ENCODE measurements at regions of chr3 and their contacts with region 1.

Region 1: DNA sequence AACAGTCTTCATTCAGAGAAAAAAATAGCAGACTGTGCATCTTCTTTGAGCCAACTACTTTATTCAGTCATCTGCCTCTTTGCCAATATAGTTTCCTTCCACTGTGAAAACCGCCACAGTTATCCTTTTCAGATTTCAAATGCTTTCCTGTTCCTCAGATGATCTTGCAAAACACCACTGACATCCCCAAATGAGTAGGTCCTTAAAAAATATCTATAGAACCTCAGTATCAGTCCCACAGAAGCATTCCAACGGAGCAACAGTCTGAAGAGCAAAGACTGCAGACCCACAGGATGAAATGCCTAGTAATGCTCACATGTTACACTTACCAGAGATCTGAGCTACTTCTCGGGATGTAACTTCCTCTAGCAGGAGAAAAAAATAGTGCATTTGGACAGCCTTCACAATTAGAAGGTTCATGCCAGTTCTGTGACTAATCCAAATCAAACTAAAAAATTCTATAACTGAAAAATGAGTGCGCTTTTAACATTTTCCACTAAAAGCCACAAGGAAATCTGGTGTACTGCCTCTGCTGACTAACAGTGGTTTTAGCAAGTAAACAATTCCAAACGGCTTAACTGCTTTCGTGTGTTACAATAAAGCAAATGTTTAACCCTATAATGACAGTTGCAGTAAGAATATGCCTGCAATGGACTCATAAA is at the start of gene ANKRD28:
- DNase-seq: peak; percentile 91 to 98 (median 96)
- H3K4me3 ChIP-seq: peak within 1 kb of the TSS; percentile 26 to 100 (median 83)
- H3K27ac ChIP-seq: peak within 1 kb of the TSS; percentile 100
- H3K4me1 ChIP-seq: peaks cover 27 to 70% (median 50%) of the 10 kb centered on the region in 4 experiments
- H3K27me3 ChIP-seq: no peaks in the 10 kb centered on the region

Region 2: DNA sequence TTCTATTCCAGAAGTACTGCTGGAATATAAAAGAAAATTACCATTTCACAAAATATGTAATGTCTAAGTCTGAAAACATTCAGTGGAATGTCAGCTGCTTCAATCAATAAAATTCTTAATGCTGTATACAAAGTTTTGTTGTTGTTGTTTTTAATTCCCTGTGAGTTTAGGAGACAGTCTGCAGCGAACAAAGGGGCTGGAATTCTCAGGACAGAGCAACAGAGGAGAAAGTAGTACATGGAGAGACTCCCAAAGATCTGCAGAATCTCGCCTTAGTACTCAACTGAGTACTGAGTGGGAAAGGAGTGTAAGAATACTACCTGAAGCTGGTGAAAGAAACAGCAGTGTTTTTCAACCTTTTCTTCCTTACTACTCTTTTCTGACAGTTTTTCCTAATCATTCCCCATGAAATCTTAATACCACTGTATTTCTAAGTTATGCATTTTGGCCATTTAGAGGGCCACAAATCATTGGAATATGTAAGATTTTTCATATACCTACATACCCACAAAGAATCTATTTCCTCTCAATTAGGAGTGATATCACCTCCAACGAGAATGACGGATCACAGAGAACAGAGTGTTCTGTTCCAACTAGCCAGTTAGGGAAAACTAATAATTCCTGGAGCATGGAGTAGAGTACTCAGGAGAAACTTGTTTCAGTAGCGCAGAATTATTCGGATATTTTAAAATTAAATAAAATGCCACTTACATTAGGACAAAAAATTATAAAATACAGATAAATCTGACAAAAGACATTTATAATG is 16.0 kb before region 1 on chr3:
- CTCF ChIA-PET with region 1: interaction called, 10 read pairs
- POLR2A ChIA-PET with region 1: interaction called, 3 read pairs
- DNase-seq: no peak
- H3K4me3 ChIP-seq: no peak overlapping the region
- H3K27ac ChIP-seq: no peak overlapping the region
- H3K4me1 ChIP-seq: peaks cover 7 to 37% (median 12%) of the 10 kb centered on the region in 4 experiments
- H3K27me3 ChIP-seq: no peaks in the 10 kb centered on the region

Region 3: GRCh38 chr3:15815696-15816095 is 17.9 kb after region 1 on chr3:
- CTCF ChIA-PET with region 1: interaction called, 54 read pairs
- POLR2A ChIA-PET with region 1: no interaction called
- DNase-seq: peak; percentile 78 to 87 (median 87)
- H3K4me3 ChIP-seq: no peak overlapping the region
- H3K27ac ChIP-seq: no peak overlapping the region
- H3K4me1 ChIP-seq: peaks cover 2 to 13% (median 9%) of the 10 kb centered on the region in 4 experiments
- H3K27me3 ChIP-seq: no peaks in the 10 kb centered on the region

Region 4: GRCh38 chr3:16130066-16130465 is 332.3 kb after region 1 on chr3:
- CTCF ChIA-PET with region 1: no interaction called
- POLR2A ChIA-PET with region 1: no interaction called
- DNase-seq: no peak
- H3K4me3 ChIP-seq: no peak overlapping the region
- H3K27ac ChIP-seq: no peak overlapping the region
- H3K4me1 ChIP-seq: no peaks in the 10 kb centered on the region
- H3K27me3 ChIP-seq: no peaks in the 10 kb centered on the region

Measured in common myeloid progenitor, CD34-positive (primary cell).